A549 (cell line): ENCODE measurements at regions of chr16 and their contacts with region 1.

Region 1: GRCh38 chr16:19086322-19087199 is 19.1 kb downstream of the COQ7 start:
- DNase-seq: peak; percentile 91 to 97
- ATAC-seq: peak; percentile 98 to 100
- H3K4me3 ChIP-seq: peak overlapping the region; percentile 45
- H3K27ac ChIP-seq: peak overlapping the region; percentile 75 to 86
- H3K4me1 ChIP-seq: peaks cover 6% of the 10 kb centered on the region; the same call in 2 of the 3 replicates
- CTCF ChIP-seq: peak; percentile 99
- EP300 ChIP-seq: no peak
- POLR2A ChIP-seq: peak; percentile 71
- RAD21 ChIP-seq: peak; percentile 98 to 100

Region 2: DNA sequence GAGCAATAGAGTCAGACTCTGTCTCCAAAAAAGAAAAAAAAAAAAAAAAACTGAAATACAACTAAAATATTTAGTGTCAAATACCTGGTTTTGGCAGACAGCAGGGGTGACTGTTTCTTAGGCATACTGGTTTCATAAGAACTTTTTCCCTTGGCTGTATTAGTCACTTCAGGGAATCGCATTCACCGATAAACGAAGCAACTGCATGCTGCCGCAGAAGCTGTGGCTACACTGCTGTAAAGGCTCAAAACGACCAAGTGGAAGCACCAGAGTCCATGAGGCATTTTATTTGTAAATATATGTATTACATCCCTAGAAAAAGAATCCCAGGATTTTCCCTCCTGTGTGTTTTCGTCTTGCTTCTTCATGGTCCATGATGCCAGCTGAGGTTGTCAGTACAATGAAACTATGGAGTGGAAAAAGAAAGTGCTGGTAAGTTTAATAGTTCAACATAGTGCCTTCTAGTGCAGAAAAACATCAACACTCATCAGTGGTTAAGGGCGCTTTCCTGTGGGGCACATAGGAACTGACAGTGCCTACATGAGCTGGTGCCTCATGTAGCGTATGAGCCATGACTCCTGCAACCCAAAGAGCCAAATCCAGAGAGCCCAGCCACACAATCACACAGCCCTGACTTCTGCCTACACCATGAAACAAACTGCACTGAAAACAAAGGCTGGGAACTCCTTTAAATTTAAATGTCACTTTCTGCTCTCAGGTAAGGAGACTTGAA is 303.7 kb before region 1 on chr16:
- CTCF ChIA-PET with region 1: no interaction called
- POLR2A ChIA-PET with region 1: no interaction called
- DNase-seq: no peak
- ATAC-seq: no peak
- H3K4me3 ChIP-seq: no peak overlapping the region
- H3K27ac ChIP-seq: no peak overlapping the region
- H3K4me1 ChIP-seq: peaks cover 34% of the 10 kb centered on the region
- CTCF ChIP-seq: no peak
- EP300 ChIP-seq: no peak
- POLR2A ChIP-seq: no peak
- RAD21 ChIP-seq: no peak

Region 3: DNA sequence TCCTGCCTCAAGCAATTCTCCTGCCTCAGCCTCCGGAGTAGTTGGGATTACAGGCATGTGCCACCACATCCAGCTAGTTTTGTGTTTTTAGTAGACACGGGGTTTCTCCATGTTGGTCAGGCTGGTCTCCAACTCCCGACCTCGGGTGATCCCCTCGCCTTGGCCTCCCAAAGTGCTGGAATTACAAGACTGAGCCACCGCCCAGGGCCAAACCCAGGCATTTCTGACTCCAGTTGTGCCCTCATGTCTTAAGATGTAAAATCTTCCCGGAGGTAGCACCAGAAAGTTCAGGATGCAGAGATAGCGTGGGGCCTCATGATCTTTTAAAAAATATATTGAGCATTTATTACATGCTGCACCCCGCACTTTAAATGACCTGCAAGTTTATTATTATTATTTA is 147.6 kb before region 1 on chr16:
- CTCF ChIA-PET with region 1: no interaction called
- POLR2A ChIA-PET with region 1: no interaction called
- DNase-seq: no peak
- ATAC-seq: no peak
- H3K4me3 ChIP-seq: no peak overlapping the region
- H3K27ac ChIP-seq: no peak overlapping the region
- H3K4me1 ChIP-seq: 0 out of 3 replicates have a peak, but pooled peaks cover 2% of the 10 kb centered on the region
- CTCF ChIP-seq: no peak
- EP300 ChIP-seq: no peak
- POLR2A ChIP-seq: no peak
- RAD21 ChIP-seq: no peak

Region 4: DNA sequence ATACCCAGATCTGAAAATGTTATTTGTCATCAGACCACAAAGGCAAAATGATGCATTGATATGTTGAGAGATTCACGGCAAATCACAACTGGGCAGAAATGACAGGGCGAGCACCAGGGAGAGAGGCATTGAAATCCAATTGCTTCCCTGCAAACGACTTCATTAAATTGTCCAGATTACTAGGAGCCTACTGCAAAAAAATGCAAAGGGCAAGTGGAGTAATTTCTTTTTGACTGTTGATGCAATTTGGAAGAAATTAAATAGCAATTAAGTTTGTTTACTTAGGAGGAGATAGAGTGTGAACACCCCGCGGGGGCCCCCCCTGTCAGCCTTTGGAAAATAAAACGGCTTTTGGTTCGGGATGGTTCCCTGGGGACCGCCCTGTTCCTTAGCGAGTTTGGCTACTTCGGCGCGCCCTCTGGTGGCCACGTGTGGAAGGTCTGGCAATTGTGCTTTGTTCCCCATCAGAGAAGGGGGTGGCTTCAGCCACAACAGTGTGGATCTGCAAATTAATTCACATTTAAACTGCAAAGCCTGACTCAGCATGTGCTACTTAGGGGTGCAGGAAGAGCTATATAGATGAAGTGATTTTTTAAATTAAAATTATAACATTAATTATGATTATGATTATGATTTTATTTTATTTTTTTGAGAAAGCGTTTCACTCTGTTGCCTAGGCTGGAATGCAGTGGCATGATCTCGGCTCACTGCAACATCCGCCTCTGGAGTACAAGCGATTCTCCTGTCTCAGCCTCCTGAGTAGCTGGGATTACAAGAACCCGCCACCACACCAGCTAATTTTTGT is 117.3 kb before region 1 on chr16:
- CTCF ChIA-PET with region 1: no interaction called
- POLR2A ChIA-PET with region 1: no interaction called
- DNase-seq: peak; percentile 75 to 94
- ATAC-seq: peak; percentile 97 to 99
- H3K4me3 ChIP-seq: peak overlapping the region; percentile 34; the same call in 2 of the 3 replicates
- H3K27ac ChIP-seq: 0 out of 6 replicates have a peak overlapping the region, but pooled peaks of 1 of the 2 experiments have one; percentile 6
- H3K4me1 ChIP-seq: 0 out of 3 replicates have a peak, but pooled peaks cover 4% of the 10 kb centered on the region
- CTCF ChIP-seq: peak; percentile 92
- EP300 ChIP-seq: no peak
- POLR2A ChIP-seq: no peak
- RAD21 ChIP-seq: peak; percentile 91 to 93

Region 5: DNA sequence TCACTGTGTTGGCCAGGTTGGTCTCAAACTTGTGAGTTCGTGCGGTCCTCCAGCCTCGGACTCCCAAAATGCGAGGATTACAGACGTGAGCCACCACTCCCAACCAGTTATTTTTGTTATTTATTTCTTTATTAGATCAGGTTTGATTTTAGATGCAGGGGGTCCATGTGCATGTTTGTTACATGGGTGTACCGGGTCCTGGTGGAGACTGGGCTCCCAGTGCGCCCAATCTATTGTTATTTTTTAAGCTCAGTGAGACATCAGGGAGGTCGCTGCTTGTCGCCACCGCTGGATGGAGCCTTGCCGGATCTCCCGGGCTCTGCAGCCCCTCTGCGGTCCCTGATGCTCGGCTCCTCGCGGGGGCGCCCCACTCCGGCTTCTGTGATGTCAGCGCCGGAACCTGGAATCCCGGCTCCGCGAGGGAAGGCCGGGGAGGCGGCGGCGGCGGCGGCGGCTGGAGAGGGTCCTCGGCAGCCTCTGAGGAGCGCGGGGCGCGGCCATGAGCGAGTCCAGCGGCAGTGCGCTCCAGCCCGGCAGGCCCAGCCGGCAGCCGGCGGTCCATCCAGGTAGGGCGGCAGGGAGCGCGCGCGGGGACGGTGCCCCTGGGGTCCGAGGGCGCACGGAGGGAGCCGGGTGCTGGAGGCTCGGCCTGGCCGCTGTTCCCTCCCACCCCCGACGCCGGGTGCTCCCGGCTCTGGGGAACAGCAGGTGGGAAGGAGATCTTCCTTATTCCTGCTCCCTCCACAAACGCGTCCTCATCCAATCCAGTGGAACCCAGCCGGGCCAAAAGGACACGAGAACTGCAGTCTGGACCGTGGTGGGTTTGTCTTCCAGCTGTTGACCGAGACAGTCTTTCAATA is 102.8 kb before region 1 on chr16 and contains the start of gene TMC7:
- CTCF ChIA-PET with region 1: interaction called, 22 read pairs
- POLR2A ChIA-PET with region 1: no interaction called
- DNase-seq: peak; percentile 86 to 92
- ATAC-seq: peak; percentile 99
- H3K4me3 ChIP-seq: peak within 1 kb of the TSS; percentile 63
- H3K27ac ChIP-seq: peak within 1 kb of the TSS; percentile 87 to 96
- H3K4me1 ChIP-seq: peaks cover 33% of the 10 kb centered on the region
- CTCF ChIP-seq: peak; percentile 98
- EP300 ChIP-seq: no peak
- POLR2A ChIP-seq: peak; percentile 27; the same call in 1 of the 2 replicates
- RAD21 ChIP-seq: peak; percentile 89 to 99
- polyA plus RNA-seq, gene TMC7: 9.4 and 15.0 TPM in 2 replicates

Region 6: GRCh38 chr16:19113453-19114351 is 27.1 kb after region 1 on chr16 and contains the start of gene ITPRIPL2:
- CTCF ChIA-PET with region 1: interaction called, 114 read pairs
- POLR2A ChIA-PET with region 1: interaction called, 4 read pairs
- DNase-seq: peak; percentile 85 to 93
- ATAC-seq: peak; percentile 85
- H3K4me3 ChIP-seq: peak within 1 kb of the TSS; percentile 67
- H3K27ac ChIP-seq: peak within 1 kb of the TSS; percentile 92 to 96
- H3K4me1 ChIP-seq: peaks cover 70% of the 10 kb centered on the region
- CTCF ChIP-seq: no peak
- EP300 ChIP-seq: no peak
- POLR2A ChIP-seq: peak; percentile 60
- RAD21 ChIP-seq: peak in 1 of 2 experiments; percentile 38; a peak in 2 of 5 replicates
- polyA plus RNA-seq, gene ITPRIPL2: 17.5 and 18.3 TPM in 2 replicates

Region 7: DNA sequence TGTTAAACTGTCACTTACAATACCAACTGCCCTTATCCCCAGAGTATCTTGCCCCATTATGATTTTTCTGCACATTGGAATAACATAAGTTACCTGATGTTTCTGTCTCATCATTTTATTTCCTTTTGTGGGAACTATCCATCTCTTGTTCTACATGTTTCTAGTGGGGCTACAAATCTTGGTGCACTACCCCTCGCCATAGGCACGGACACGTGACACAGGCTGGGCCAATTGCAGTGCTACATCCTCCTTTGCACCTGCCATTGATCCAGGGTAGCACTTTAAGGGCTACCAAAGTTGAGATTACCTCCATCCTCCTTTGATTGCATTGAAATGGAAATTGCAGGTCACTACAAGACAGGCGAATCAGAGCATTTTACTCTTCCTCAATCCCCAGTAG is 67.3 kb after region 1 on chr16:
- CTCF ChIA-PET with region 1: interaction called, 14 read pairs
- POLR2A ChIA-PET with region 1: no interaction called
- DNase-seq: peak; percentile 59 to 79
- ATAC-seq: peak in 1 of 2 experiments; percentile 77; a peak in 3 of 6 replicates
- H3K4me3 ChIP-seq: no peak overlapping the region
- H3K27ac ChIP-seq: no peak overlapping the region
- H3K4me1 ChIP-seq: no peaks in the 10 kb centered on the region
- CTCF ChIP-seq: no peak
- EP300 ChIP-seq: no peak
- POLR2A ChIP-seq: no peak
- RAD21 ChIP-seq: no peak

Region 8: DNA sequence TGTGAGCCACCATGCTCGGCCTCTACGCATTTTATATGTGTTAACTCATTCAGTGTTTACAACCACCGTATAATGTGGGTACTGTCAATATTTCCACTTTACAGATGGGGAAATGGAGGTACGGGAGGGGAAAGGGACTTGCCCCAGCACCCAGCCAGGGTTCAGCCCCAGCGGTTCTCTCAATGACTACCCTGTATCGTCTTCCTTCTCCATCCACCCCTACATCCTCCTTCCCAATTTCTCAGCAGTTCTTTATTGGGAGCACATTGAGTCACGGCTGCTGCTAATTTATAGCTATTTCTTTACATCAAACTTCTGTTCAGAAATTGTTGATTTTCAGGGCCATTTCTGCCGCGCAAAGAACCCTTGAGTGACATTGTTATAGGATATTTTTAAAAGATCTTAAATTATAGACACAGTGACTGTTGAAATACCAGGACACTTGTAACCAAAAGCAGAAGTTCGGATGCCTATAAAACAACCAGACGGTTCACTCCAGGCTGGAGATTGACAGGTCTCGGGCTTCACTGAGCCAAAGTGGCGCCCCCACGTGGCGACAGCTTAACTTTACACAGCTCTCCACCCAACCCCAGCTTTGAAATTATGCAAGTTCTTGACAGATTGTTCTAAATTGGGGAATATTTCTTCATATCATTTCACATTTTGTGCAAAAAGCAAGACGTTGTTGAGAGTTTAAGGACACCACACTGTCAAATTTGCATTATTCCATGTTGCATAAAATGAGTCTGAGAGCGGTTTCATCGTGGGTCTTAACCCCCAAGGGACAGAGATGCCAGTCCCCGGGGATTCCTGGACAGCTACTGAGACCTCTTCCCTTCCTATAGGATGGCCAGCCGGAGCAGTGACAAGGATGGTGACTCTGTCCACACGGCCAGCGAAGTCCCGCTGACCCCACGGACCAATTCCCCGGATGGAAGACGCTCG is 93.3 kb after region 1 on chr16:
- CTCF ChIA-PET with region 1: interaction called, 94 read pairs
- POLR2A ChIA-PET with region 1: no interaction called
- DNase-seq: peak; percentile 70 to 76
- ATAC-seq: peak; percentile 70 to 90; a peak in 4 of 6 replicates
- H3K4me3 ChIP-seq: no peak overlapping the region
- H3K27ac ChIP-seq: no peak overlapping the region
- H3K4me1 ChIP-seq: peaks cover 14% of the 10 kb centered on the region
- CTCF ChIP-seq: peak; percentile 78
- EP300 ChIP-seq: no peak
- POLR2A ChIP-seq: no peak
- RAD21 ChIP-seq: peak; percentile 53 to 57; a peak in 4 of 5 replicates

Region 9: DNA sequence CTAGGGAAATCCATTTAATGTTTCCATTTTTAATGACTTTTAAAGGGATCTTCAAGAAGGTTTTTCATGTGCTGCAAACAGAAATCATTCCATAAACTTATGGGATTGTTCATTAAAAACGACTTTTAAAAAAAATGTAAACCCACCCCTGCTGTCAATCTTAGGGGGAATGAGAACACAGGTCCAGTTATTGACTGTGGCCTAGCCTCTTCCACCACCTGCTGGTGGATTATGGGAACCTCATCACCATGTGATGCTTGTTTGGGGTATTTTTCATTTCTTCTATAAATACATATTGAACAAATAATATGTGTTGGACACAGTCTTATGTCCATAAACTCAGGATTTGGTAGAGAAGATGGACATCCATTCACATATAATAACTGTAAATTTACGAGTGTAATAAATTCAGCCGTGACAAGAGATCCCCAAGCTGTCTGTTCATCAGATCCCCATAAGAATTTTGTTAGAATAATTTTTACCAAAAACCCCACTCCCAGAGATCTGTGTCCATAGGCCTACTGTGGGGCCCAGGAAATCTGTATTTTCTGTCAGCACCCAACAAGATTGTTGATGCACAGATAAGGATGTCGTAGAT is 289.1 kb after region 1 on chr16:
- CTCF ChIA-PET with region 1: interaction called, 151 read pairs
- POLR2A ChIA-PET with region 1: no interaction called
- DNase-seq: peak; percentile 70 to 73
- ATAC-seq: peak; percentile 81 to 91; a peak in 5 of 6 replicates
- H3K4me3 ChIP-seq: no peak overlapping the region
- H3K27ac ChIP-seq: no peak overlapping the region
- H3K4me1 ChIP-seq: no peaks in the 10 kb centered on the region
- CTCF ChIP-seq: peak; percentile 98
- EP300 ChIP-seq: no peak
- POLR2A ChIP-seq: no peak
- RAD21 ChIP-seq: peak; percentile 98 to 99

Region 10: GRCh38 chr16:19502395-19503131 is 416.0 kb after region 1 on chr16:
- CTCF ChIA-PET with region 1: interaction called, 61 read pairs
- POLR2A ChIA-PET with region 1: no interaction called
- DNase-seq: peak; percentile 71 to 82
- ATAC-seq: peak; percentile 88 to 95
- H3K4me3 ChIP-seq: no peak overlapping the region
- H3K27ac ChIP-seq: no peak overlapping the region
- H3K4me1 ChIP-seq: no peaks in the 10 kb centered on the region
- CTCF ChIP-seq: peak; percentile 92
- EP300 ChIP-seq: no peak
- POLR2A ChIP-seq: no peak
- RAD21 ChIP-seq: peak; percentile 87 to 88